ENCODE measurements at regions of chr6 and their contacts with region 1.

Region 1: DNA sequence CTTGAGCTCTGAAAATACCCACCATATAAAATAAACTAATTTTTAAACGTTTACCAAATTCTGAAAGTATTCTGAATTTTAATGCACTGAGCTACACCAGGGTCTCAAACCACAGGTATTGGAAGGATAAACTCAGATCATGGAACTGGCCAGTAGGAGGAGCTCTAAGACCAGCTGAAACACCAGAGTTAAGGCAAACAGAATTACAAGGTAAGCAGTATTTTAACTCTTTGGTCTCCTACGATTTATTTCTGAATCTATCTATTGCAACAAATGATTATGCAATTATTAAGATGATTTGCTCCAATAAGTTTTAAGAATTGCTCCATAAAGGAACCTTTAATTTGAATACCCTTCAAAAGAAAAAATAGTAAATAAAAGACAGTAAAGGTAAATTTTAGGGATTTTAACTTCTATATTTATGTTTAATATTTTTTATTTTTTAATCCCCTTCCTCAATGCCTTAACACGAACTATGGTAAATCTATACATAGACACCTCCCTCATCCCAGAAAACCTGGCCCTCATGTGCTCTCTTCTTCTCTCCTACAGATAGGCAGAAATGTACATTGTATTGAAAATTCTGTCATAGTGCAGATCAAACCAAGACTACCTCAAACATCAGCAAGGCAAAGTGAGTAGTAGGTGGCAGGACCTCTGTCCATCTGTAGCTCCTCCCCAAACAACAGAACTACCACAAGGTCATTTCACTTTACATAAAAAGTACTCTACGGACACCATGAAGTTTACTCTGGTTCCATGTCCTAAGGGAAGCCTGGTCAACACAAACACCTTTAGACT is 58.4 kb downstream of the SMLR1 start:
- DNase-seq: peak; percentile 72 to 79 (median 77)
- H3K4me3 ChIP-seq: no peak overlapping the region
- H3K4me3 Mint-ChIP-seq: no peak overlapping the region
- H3K27ac ChIP-seq: no peak overlapping the region
- H3K27ac Mint-ChIP-seq: no peak overlapping the region
- H3K4me1 ChIP-seq: no peaks in the 10 kb centered on the region
- H3K4me1 Mint-ChIP-seq: no peaks in the 10 kb centered on the region
- H3K27me3 ChIP-seq: no peaks in the 10 kb centered on the region
- H3K27me3 Mint-ChIP-seq: no peaks in the 10 kb centered on the region

Region 2: DNA sequence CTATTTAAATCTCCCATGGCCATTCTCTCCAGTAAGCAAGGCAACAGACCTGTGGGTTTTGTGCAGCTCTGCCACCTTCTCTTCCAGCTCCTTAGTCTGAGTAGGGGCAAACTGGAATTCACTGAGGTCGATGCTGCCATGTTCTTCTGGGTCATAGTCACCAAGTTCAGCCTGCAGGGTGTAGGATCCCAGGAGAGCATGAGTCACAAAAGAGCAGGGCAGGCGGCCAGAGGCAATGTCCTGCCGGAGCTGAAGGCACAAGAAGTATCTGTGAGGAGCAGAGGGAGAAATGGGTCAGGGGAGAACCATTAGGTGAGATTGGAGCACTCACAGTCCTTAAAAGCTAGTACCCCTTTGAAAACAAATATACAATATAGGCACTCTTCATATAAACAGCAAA is 15.3 kb after region 1 on chr6:
- CTCF ChIA-PET with region 1: interaction called, 10 read pairs
- POLR2A ChIA-PET with region 1: no interaction called
- intact Hi-C with region 1: no loop called
- DNase-seq: no peak
- H3K4me3 ChIP-seq: no peak overlapping the region
- H3K4me3 Mint-ChIP-seq: no peak overlapping the region
- H3K27ac ChIP-seq: no peak overlapping the region
- H3K27ac Mint-ChIP-seq: no peak overlapping the region
- H3K4me1 ChIP-seq: no peaks in the 10 kb centered on the region
- H3K4me1 Mint-ChIP-seq: no peaks in the 10 kb centered on the region
- H3K27me3 ChIP-seq: no peaks in the 10 kb centered on the region
- H3K27me3 Mint-ChIP-seq: no peaks in the 10 kb centered on the region

Region 3: DNA sequence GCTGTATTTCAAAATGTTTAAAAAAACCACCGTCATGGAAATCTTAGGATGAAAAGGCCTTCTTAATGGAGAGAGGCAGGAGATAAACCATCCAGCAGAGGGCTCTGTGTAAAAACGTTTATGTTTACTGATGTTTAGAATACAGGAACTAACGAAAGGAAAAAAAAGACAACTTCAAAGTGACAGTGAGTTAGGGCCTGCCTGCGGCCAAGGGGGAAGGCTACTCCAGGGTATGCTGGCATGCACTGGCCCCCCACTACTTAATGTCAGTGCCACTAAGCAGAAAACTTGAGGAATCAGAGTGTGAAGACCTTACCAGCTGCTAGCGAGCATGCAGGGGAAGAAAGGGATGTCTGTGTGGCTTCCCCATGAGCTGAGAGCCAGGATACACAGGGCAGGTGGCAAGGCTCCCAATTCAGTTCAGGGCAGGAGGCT is 297.4 kb after region 1 on chr6:
- CTCF ChIA-PET with region 1: interaction called, 4 read pairs
- POLR2A ChIA-PET with region 1: no interaction called
- intact Hi-C with region 1: loop called (anchors 1 kb)
- DNase-seq: peak; percentile 43 to 57 (median 53)
- H3K4me3 ChIP-seq: peak overlapping the region in 1 of 2 donors; percentile 36
- H3K4me3 Mint-ChIP-seq: peak overlapping the region in 7 of 8 donors; percentile 52 to 90 (median 69)
- H3K27ac ChIP-seq: no peak overlapping the region
- H3K27ac Mint-ChIP-seq: peak overlapping the region; percentile 25 to 96 (median 88)
- H3K4me1 ChIP-seq: peaks cover 10% of the 10 kb centered on the region
- H3K4me1 Mint-ChIP-seq: peaks cover 6 to 18% (median 11%) of the 10 kb centered on the region in 4 donors
- H3K27me3 ChIP-seq: no peaks in the 10 kb centered on the region
- H3K27me3 Mint-ChIP-seq: no peaks in the 10 kb centered on the region

Region 4: DNA sequence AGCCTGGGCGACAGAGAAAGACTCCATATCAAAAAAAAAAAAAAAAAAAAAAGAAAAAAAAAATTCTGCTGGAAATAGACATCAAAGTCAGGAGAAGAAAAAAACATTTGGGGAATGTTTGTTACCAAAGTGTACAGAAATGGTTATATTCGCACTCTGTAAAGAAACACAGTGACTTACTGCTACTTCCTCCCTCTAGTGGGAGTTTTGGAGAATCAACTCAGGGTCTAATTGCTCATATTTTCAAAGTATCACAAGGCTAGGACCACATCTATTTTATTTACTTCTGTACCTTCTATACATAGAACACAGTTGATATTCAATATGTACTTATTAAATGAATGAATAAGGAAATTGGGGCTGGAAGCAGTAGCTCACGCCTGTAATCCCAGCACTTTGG is 711.9 kb after region 1 on chr6:
- CTCF ChIA-PET with region 1: interaction called, 5 read pairs
- POLR2A ChIA-PET with region 1: no interaction called
- intact Hi-C with region 1: loop called (anchors 1 kb)
- DNase-seq: peak in 2 of 5 donors; percentile 8 to 11
- H3K4me3 ChIP-seq: no peak overlapping the region
- H3K4me3 Mint-ChIP-seq: no peak overlapping the region
- H3K27ac ChIP-seq: no peak overlapping the region
- H3K27ac Mint-ChIP-seq: no peak overlapping the region
- H3K4me1 ChIP-seq: no peaks in the 10 kb centered on the region
- H3K4me1 Mint-ChIP-seq: peaks cover 0 to 2% (median under 1%) of the 10 kb centered on the region in 4 donors
- H3K27me3 ChIP-seq: no peaks in the 10 kb centered on the region
- H3K27me3 Mint-ChIP-seq: no peaks in the 10 kb centered on the region

Region 5: DNA sequence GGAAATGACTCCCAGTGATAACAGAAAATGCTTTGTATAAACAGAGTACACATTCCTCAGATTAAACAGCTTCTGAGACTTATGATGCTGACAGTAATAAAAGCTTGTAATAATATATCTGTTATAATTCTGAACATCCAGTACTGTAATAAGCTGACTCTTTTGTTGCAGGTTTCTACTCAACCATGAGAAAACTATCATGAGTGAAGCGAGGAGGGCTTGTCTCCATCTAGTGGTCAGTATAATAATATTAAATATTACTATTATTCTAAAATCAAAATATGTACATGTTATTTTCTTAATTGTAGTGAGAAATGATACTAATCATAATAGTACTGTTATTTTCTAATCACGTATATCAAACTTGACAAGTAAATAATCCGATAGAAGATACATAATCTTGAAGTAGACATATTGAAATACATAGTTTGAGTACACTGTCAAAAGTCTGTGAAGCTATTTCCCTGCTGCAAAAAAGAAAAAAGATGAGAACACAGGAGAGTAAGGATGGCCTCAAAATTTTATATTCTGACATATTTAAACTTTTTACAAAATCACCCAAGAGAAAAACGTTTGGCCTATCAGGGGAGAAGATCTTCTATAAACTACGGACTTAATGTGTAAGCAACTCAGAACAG is 1332.6 kb after region 1 on chr6:
- CTCF ChIA-PET with region 1: no interaction called
- POLR2A ChIA-PET with region 1: no interaction called
- intact Hi-C with region 1: loop called (anchors 5 kb)
- DNase-seq: no peak
- H3K4me3 ChIP-seq: no peak overlapping the region
- H3K4me3 Mint-ChIP-seq: no peak overlapping the region
- H3K27ac ChIP-seq: no peak overlapping the region
- H3K27ac Mint-ChIP-seq: no peak overlapping the region
- H3K4me1 ChIP-seq: no peaks in the 10 kb centered on the region
- H3K4me1 Mint-ChIP-seq: no peaks in the 10 kb centered on the region
- H3K27me3 ChIP-seq: no peaks in the 10 kb centered on the region
- H3K27me3 Mint-ChIP-seq: peaks cover 3 to 5% of the 10 kb centered on the region in 2 donors